ENCODE measurements at regions of chr12 and their contacts with region 1.

Region 1: DNA sequence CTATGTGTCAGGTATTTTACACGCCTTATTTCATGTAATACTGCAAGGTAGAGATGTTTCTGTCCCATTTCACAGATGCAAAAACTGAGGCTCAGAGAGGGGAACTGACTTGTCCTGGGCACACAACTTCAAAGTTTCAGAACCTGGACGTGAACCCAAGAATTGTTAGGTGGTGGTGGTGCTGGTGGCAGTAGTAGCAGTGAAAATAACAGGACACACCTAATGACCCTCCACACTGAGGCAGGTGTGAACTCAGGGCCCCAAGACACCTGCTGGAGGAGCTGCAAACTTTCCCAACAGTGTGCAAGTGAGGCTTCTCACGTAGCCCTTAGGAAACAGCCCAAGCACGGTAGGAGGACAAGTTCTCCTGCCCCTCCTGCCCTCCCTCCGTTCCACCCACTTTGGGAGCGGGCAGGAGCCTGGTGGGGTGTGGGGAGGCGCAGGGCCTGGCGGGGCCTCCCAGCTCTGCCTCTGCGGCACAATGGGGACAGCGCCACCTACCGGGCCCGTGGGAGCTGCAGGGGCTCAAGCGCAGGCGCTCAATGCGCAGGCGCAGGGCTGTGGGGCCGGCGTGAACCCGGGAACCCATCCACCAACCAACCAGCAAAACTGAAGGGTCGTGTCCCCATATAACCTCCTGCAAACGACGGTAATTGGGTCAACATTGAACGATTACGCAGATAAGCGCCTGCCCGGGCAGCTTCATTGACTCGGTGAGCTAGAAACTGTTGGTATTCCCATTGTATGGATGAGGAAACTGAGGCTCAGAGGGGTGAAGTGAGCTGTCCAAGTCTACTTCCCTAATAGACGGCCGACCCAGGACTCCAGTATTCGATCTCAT is 12.0 kb upstream of the TRPV4 start:
- DNase-seq: peak; percentile 82
- H3K4me3 Mint-ChIP-seq: no peak overlapping the region
- H3K27ac Mint-ChIP-seq: no peak overlapping the region
- H3K4me1 Mint-ChIP-seq: no peaks in the 10 kb centered on the region
- H3K27me3 Mint-ChIP-seq: no peaks in the 10 kb centered on the region
- CTCF ChIP-seq: peak; percentile 97

Region 2: GRCh38 chr12:109362471-109362870 is 482.7 kb before region 1 on chr12:
- CTCF ChIA-PET with region 1: no interaction called
- POLR2A ChIA-PET with region 1: no interaction called
- intact Hi-C with region 1: no loop called
- DNase-seq: no peak
- H3K4me3 Mint-ChIP-seq: no peak overlapping the region
- H3K27ac Mint-ChIP-seq: no peak overlapping the region
- H3K4me1 Mint-ChIP-seq: no peaks in the 10 kb centered on the region
- H3K27me3 Mint-ChIP-seq: peaks cover 75% of the 10 kb centered on the region
- CTCF ChIP-seq: no peak

Region 3: DNA sequence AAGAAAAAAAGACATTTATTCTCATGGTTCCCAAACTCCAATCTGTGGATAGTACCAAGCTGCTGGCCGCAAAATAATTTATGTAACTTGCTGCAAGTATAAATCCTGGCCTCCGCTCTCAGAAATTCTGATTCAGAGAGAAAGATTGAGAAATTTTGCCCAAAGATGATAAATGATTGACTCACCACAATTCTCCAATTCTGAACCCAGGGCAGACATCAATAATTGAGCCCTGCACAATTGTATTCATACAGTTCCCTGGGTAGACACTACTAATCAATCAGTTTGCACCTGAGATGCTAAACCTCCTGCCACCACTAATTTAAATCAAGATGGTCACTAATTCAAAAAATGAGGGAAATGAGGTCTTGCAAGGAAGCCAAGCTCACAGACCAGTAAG is 50.2 kb before region 1 on chr12:
- CTCF ChIA-PET with region 1: interaction called, 12 read pairs
- POLR2A ChIA-PET with region 1: interaction called, 3 read pairs
- intact Hi-C with region 1: no loop called
- DNase-seq: peak; percentile 81
- H3K4me3 Mint-ChIP-seq: no peak overlapping the region
- H3K27ac Mint-ChIP-seq: no peak overlapping the region
- H3K4me1 Mint-ChIP-seq: peaks cover 11% of the 10 kb centered on the region
- H3K27me3 Mint-ChIP-seq: no peaks in the 10 kb centered on the region
- CTCF ChIP-seq: no peak

Region 4: GRCh38 chr12:109818905-109819500 is 26.2 kb before region 1 on chr12:
- CTCF ChIA-PET with region 1: interaction called, 39 read pairs
- POLR2A ChIA-PET with region 1: interaction called, 10 read pairs
- intact Hi-C with region 1: no loop called
- DNase-seq: peak; percentile 93
- H3K4me3 Mint-ChIP-seq: no peak overlapping the region
- H3K27ac Mint-ChIP-seq: peak overlapping the region; percentile 76
- H3K4me1 Mint-ChIP-seq: peaks cover 45% of the 10 kb centered on the region
- H3K27me3 Mint-ChIP-seq: no peaks in the 10 kb centered on the region
- CTCF ChIP-seq: no peak

Region 5: GRCh38 chr12:109828236-109828550 is 17.0 kb before region 1 on chr12:
- CTCF ChIA-PET with region 1: interaction called, 24 read pairs
- POLR2A ChIA-PET with region 1: interaction called, 3 read pairs
- intact Hi-C with region 1: no loop called
- DNase-seq: no peak
- H3K4me3 Mint-ChIP-seq: no peak overlapping the region
- H3K27ac Mint-ChIP-seq: no peak overlapping the region
- H3K4me1 Mint-ChIP-seq: peaks cover 5% of the 10 kb centered on the region
- H3K27me3 Mint-ChIP-seq: no peaks in the 10 kb centered on the region
- CTCF ChIP-seq: no peak

Region 6: DNA sequence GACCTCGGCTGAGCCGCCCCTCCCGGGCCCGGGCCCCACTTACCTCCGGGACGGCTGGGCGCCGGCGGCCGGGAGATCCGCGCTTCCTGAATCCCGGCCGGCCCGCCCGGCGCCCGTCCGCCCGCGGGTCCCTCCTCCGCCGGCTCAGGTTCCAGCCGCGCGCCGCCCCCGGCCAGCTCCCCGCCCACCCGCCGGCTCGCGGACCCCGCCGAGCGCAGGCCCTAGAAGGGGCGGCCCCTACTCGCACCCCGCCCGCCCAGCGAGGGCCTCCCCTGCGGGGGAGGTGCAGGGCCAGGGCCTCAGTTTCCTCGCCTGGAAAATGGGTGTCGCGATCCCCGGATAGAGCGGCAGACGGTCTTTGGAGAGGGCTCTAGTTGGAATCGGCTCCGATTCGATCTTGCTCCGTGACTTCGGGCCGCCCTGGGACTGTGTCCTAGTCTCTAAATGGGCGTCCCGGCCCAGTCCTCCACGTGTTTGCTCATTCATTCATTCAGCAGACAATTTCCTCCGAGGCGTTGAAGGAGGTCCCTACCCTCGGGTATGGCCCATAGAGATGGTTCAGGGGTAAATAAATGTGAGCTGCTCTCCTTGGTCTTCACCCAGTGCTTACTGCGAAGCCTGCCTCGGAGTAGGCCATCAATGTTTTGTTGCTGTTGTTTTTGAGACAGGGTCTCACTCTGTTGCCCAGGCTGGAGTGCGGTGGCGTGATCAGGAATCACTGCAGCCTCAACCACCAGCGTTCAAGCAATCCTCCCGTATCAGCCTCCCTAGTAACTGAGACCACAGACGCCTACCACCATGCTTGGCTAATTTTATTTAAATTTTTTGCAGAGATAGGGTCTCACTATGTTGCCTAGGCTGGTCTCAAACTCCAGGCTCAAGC is 11.7 kb before region 1 on chr12 and contains the start of gene TRPV4:
- CTCF ChIA-PET with region 1: interaction called, 24 read pairs
- POLR2A ChIA-PET with region 1: no interaction called
- intact Hi-C with region 1: no loop called
- DNase-seq: no peak
- H3K4me3 Mint-ChIP-seq: no peak within 1 kb of the TSS
- H3K27ac Mint-ChIP-seq: no peak within 1 kb of the TSS
- H3K4me1 Mint-ChIP-seq: peaks cover 17% of the 10 kb centered on the region
- H3K27me3 Mint-ChIP-seq: no peaks in the 10 kb centered on the region
- CTCF ChIP-seq: no peak
- total RNA-seq, gene TRPV4: 0.09 and 0.15 TPM in 2 replicates

Region 7: DNA sequence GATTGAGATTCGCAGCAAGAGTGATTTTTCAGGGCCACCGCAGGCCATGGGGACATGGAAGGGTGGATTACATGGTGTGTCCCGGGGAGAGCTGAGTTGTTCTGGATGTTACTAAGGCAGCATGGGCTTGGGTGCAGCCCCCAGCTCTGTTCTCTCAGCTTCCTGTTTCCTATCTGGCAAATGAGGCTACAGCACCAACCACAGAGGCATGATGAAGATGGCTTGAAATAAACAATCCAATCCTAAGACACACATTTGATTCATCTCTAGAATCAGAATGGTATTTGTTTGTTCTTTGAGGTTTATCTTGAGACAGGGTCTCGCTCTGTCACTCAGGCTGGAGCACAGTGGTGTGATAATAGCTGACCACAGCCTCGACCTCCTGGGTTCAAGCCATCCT is 13.6 kb after region 1 on chr12:
- CTCF ChIA-PET with region 1: interaction called, 14 read pairs
- POLR2A ChIA-PET with region 1: interaction called, 5 read pairs
- intact Hi-C with region 1: no loop called
- DNase-seq: no peak
- H3K4me3 Mint-ChIP-seq: no peak overlapping the region
- H3K27ac Mint-ChIP-seq: no peak overlapping the region
- H3K4me1 Mint-ChIP-seq: no peaks in the 10 kb centered on the region
- H3K27me3 Mint-ChIP-seq: no peaks in the 10 kb centered on the region
- CTCF ChIP-seq: no peak